Gastrocnemius medialis (tissue), 4 donors: ENCODE measurements at regions of chr18 and their contacts with region 1.

Region 1: GRCh38 chr18:13216092-13216582 is 2.4 kb upstream of the LDLRAD4 start:
- DNase-seq: peak; percentile 71 to 73
- ATAC-seq: peak; percentile 55 to 59
- H3K4me3 ChIP-seq: peak overlapping the region in 1 of 4 donors; percentile 79
- H3K27ac ChIP-seq: peak overlapping the region; percentile 71 to 94 (median 81)
- H3K4me1 ChIP-seq: peaks cover 31 to 33% of the 10 kb centered on the region in 2 donors
- H3K27me3 ChIP-seq: no peaks in the 10 kb centered on the region
- CTCF ChIP-seq: peak; percentile 67 to 84 (median 72)
- POLR2A ChIP-seq: no peak

Region 2: DNA sequence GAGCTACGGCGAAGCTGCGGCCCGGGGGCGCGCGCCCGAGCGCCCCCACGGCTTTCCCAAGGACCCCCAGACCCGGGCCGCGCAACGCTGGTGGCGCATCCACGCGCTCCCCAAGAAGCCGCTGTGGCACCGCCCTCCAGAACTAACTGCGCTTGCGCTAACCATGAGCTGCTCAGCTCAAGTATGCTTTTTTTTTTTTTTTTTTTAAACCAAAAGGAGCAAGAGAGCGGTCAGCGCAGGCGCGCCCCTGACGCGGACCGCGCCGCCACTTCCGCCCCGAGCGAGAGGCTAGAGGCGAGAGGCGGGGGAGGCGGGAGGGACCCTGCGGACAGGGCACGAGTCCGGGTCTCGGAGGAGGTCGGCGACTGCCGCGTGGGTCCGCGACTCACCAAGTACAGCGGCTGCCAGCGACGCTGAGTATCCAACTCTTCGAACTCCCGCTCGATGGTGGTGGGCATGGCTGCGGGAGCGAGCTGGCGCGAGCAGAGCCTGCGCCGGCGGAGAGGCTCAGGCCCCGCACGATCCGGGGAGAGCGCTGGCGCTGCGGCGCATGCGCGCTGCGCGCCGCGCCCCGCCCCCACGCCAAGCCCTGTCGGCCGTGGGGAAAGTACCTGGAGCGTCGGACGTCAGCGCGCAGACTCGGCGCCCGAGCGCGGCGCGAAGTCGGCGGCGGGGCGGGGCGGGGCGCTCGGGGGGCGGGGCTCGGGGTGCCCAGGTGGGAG is 332.3 kb before region 1 on chr18 and contains the start of gene PTPN2:
- in situ Hi-C with region 1: no loop called
- intact Hi-C with region 1: loop called (anchors 5 kb)
- DNase-seq: peak; percentile 88 to 92
- ATAC-seq: peak; percentile 91 to 95
- H3K4me3 ChIP-seq: peak within 1 kb of the TSS; percentile 72 to 90 (median 82)
- H3K27ac ChIP-seq: peak within 1 kb of the TSS; percentile 92 to 98 (median 96)
- H3K4me1 ChIP-seq: peaks cover 16 to 20% of the 10 kb centered on the region in 2 donors
- H3K27me3 ChIP-seq: no peaks in the 10 kb centered on the region
- CTCF ChIP-seq: no peak
- POLR2A ChIP-seq: peak; percentile 93 to 94
- total RNA-seq, gene PTPN2: 17.0 to 20.0 (median 17.5) TPM

Region 3: GRCh38 chr18:13375302-13376255 is 159.4 kb after region 1 on chr18:
- in situ Hi-C with region 1: no loop called
- intact Hi-C with region 1: loop called (anchors 2 kb)
- DNase-seq: peak; percentile 28 to 38
- ATAC-seq: peak in 1 of 2 donors; percentile 41
- H3K4me3 ChIP-seq: no peak overlapping the region
- H3K27ac ChIP-seq: peak overlapping the region; percentile 14 to 35 (median 22)
- H3K4me1 ChIP-seq: peaks cover 44 to 46% of the 10 kb centered on the region in 2 donors
- H3K27me3 ChIP-seq: no peaks in the 10 kb centered on the region
- CTCF ChIP-seq: no peak
- POLR2A ChIP-seq: no peak

Region 4: GRCh38 chr18:13435596-13436327 is 219.6 kb after region 1 on chr18:
- in situ Hi-C with region 1: no loop called
- intact Hi-C with region 1: loop called (anchors 5 kb)
- DNase-seq: no peak
- ATAC-seq: peak; percentile 70 to 76
- H3K4me3 ChIP-seq: no peak overlapping the region
- H3K27ac ChIP-seq: peak overlapping the region; percentile 51 to 69 (median 67)
- H3K4me1 ChIP-seq: peaks cover 0 to 19% of the 10 kb centered on the region in 2 donors
- H3K27me3 ChIP-seq: no peaks in the 10 kb centered on the region
- CTCF ChIP-seq: no peak
- POLR2A ChIP-seq: no peak

Region 5: GRCh38 chr18:13629841-13630715 is 413.9 kb after region 1 on chr18:
- in situ Hi-C with region 1: loop called in 2 of 4 experiments (anchors 10 to 25 kb)
- intact Hi-C with region 1: loop called (anchors 2 kb)
- DNase-seq: no peak
- ATAC-seq: peak; percentile 85 to 87
- H3K4me3 ChIP-seq: no peak overlapping the region
- H3K27ac ChIP-seq: no peak overlapping the region
- H3K4me1 ChIP-seq: peaks cover 4% of the 10 kb centered on the region in 2 donors
- H3K27me3 ChIP-seq: no peaks in the 10 kb centered on the region
- CTCF ChIP-seq: peak; percentile 54 to 79 (median 72)
- POLR2A ChIP-seq: no peak

Region 6: DNA sequence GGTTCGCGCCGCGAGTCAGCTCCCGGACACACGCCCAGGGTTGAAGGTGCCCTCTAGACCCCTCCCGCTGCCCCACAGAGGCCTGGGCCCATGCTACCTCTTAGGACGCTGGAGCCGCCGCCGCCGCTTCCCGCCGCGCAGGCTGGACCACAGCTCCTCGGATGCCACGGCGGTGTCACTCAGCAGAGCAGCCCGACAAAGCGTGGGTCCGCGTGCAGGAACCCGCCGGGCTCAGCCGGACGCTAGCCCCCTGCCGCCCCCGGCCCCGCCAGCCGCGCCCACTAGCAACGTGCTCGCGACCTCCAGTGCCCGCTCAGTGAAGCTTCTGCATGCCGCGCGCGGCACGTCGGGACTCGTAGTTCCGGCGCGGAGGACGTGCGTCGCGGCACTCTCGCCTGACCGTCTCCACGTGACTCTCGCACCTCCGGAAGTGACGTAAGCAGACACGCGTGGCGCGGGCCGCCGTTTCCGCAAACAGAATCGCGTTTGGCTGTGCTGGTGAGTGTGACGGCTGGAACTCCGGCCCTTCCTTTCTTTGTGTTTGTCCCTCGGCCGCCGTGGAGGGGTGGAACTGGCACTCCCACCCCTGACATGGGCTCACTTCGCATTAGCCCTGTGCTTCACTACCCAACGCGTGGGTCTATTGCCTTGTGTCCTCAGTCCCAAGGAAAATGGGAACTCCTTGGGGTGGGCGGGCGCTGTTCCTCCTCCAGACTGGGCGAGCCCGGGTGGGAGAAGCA is 510.3 kb after region 1 on chr18 and contains the starts of genes FAM210A and RNMT:
- in situ Hi-C with region 1: loop called in 1 of 4 experiments (anchors 25 kb)
- intact Hi-C with region 1: loop called (anchors 5 kb)
- DNase-seq: peak; percentile 93 to 94
- ATAC-seq: peak; percentile 93 to 96
- H3K4me3 ChIP-seq: peak within 1 kb of the TSS; percentile 74 to 88 (median 81)
- H3K27ac ChIP-seq: peak within 1 kb of the TSS; percentile 93 to 98 (median 96)
- H3K4me1 ChIP-seq: peaks cover 25 to 34% of the 10 kb centered on the region in 2 donors
- H3K27me3 ChIP-seq: no peaks in the 10 kb centered on the region
- CTCF ChIP-seq: peak in 1 of 5 experiments; percentile 22
- POLR2A ChIP-seq: peak; percentile 83 to 88
- total RNA-seq, gene FAM210A: 7.8 to 23.1 (median 16.3) TPM
- total RNA-seq, gene RNMT: 12.9 to 24.1 (median 18.6) TPM